GM12878 (cell line): ENCODE measurements at regions of chr2 and their contacts with region 1.

Region 1: DNA sequence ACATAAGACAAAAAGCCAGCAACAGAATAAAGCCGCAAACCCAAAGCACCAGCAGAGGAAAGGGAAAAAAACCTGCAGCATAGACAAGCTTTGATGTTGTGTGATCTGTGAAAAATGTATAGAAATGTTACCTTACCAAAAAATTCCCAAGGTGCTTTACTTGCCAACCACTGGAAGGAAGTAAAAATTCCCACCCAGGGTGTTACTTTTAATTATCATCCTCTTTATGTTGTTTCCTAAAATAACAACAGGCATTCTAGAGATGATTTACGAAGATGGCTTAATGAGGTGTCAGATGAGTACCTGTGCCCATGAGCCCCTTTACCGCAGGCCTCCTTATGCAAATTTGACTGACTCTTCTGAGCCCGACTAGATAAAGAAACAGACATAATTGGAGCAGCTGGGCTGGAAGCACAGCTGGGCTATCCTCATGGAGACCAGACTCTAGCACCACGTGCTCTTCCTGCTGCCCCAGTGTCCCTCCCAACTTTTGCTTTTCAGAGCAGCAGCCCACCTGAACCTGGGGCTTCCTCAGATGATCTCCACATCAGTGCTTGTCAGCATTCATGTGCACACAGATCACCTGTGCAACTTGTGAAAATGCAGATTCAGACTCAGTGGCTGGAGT is 41.5 kb downstream of the SRSF7 start:
- DNase-seq: peak; percentile 35
- ATAC-seq: peak; percentile 87
- H3K4me3 ChIP-seq: no peak overlapping the region
- H3K27ac ChIP-seq: no peak overlapping the region
- H3K4me1 ChIP-seq: peaks cover 16% of the 10 kb centered on the region
- H3K27me3 ChIP-seq: no peaks in the 10 kb centered on the region
- CTCF ChIP-seq: no peak
- EP300 ChIP-seq: peak in 1 of 2 experiments; percentile 47; a peak in 2 of 4 replicates
- POLR2A ChIP-seq: no peak
- RAD21 ChIP-seq: no peak

Region 2: GRCh38 chr2:38665854-38666555 is 43.7 kb before region 1 on chr2 and contains the start of gene GALM:
- CTCF ChIA-PET with region 1: no interaction called
- POLR2A ChIA-PET with region 1: interaction called, 12 read pairs
- RAD21 ChIA-PET with region 1: no interaction called
- SMC1A ChIA-PET with region 1: interaction called, 5 read pairs
- in situ Hi-C with region 1: no loop called
- intact Hi-C with region 1: no loop called
- DNase-seq: no peak
- ATAC-seq: peak; percentile 55
- H3K4me3 ChIP-seq: peak within 1 kb of the TSS; percentile 56; the same call in 1 of the 2 replicates
- H3K27ac ChIP-seq: peak within 1 kb of the TSS; percentile 33; the same call in 1 of the 2 replicates
- H3K4me1 ChIP-seq: peaks cover 28% of the 10 kb centered on the region
- H3K27me3 ChIP-seq: no peaks in the 10 kb centered on the region
- CTCF ChIP-seq: no peak
- EP300 ChIP-seq: no peak
- POLR2A ChIP-seq: no peak
- RAD21 ChIP-seq: no peak
- polyA plus RNA-seq, gene GALM: 1.5 to 1.7 TPM